HCT116 (cell line): ENCODE measurements at regions of chr17 and their contacts with region 1.

Region 1: DNA sequence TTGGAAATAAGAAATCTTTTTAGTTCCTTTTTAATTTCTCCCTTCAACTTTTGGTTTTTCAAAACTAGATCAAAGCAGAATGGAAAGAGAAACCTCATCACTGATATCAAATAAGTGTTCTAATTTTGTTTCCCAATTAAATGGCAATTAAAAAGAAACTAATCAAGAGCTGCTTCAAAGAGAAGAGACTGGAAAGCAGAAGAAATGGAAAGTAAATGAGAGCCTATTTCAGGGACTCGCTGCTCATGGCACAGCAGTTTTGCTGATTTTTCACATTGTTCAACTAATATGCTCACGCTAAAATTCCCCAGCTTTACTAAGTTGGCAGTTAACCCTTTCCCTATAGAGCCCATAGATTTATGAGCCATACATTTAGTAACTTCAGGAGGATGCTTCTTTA is 6.5 kb downstream of the NMT1 start:
- DNase-seq: no peak
- ATAC-seq: no peak
- H3K4me3 ChIP-seq: no peak overlapping the region
- H3K27ac ChIP-seq: no peak overlapping the region
- H3K4me1 ChIP-seq: peaks cover under 1 to 2% of the 10 kb centered on the region in 2 experiments
- H3K27me3 ChIP-seq: no peaks in the 10 kb centered on the region
- CTCF ChIP-seq: no peak
- POLR2A ChIP-seq: no peak
- RAD21 ChIP-seq: no peak

Region 2: DNA sequence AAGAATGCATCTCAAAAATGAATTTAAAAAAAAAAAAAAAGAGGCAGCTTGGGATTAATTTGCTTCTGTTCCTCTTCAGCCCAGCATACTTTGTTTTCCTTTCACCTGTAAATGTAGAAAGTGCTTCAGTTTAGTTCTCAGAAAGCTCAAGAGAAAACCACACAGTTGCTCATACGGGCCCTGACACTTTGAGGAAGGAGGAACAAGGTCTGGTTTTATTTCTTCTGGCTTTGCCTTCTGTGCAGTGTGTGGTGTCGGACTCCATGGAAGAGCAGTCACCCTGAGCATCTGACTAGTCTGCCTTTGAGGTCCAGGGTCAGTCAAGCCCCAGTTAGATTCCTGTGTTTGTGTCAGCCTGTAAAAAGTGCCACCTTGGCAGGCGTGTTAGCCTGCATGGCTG is 21.1 kb after region 1 on chr17:
- CTCF ChIA-PET with region 1: no interaction called
- POLR2A ChIA-PET with region 1: no interaction called
- RAD21 ChIA-PET with region 1: no interaction called
- intact Hi-C with region 1: loop called (anchors 2 kb)
- DNase-seq: no peak
- ATAC-seq: no peak
- H3K4me3 ChIP-seq: no peak overlapping the region
- H3K27ac ChIP-seq: no peak overlapping the region
- H3K4me1 ChIP-seq: peaks cover 3 to 24% of the 10 kb centered on the region in 2 experiments
- H3K27me3 ChIP-seq: no peaks in the 10 kb centered on the region
- CTCF ChIP-seq: no peak
- POLR2A ChIP-seq: no peak
- RAD21 ChIP-seq: no peak